Calu3 (cell line): ENCODE measurements at regions of chr1 and their contacts with region 1.

Region 1: GRCh38 chr1:217747156-217747769 is 116.1 kb downstream of the SPATA17 start:
- DNase-seq: no peak
- H3K4me3 Mint-ChIP-seq: no peak overlapping the region
- H3K27ac Mint-ChIP-seq: no peak overlapping the region
- H3K4me1 Mint-ChIP-seq: no peaks in the 10 kb centered on the region
- H3K27me3 Mint-ChIP-seq: no peaks in the 10 kb centered on the region
- CTCF ChIP-seq: peak; percentile 51

Region 2: GRCh38 chr1:216750012-216750627 is 997.1 kb before region 1 on chr1:
- CTCF ChIA-PET with region 1: no interaction called
- intact Hi-C with region 1: loop called (anchors 2 kb)
- DNase-seq: peak; percentile 29
- H3K4me3 Mint-ChIP-seq: no peak overlapping the region
- H3K27ac Mint-ChIP-seq: no peak overlapping the region
- H3K4me1 Mint-ChIP-seq: no peaks in the 10 kb centered on the region
- H3K27me3 Mint-ChIP-seq: no peaks in the 10 kb centered on the region
- CTCF ChIP-seq: peak; percentile 59

Region 3: DNA sequence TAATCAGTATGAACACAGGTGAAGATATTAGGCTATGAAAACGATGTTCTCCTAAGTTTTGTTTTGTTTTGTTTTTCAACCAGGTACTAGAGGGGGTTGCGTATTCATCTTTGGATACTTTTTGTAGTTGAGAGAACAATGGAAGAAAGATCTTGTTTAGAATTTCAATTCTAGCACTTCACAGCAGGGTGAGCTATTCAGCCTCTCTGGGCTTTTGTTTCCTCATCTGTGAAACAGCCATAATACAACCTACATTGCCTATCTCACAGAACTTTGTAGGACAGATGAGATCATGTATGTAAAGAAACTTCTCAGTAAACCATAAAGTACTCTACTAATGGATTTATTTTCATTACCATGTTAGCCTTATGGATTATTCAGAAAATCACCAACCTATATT is 315.9 kb before region 1 on chr1:
- CTCF ChIA-PET with region 1: no interaction called
- intact Hi-C with region 1: loop called (anchors 2 kb)
- DNase-seq: no peak
- H3K4me3 Mint-ChIP-seq: no peak overlapping the region
- H3K27ac Mint-ChIP-seq: no peak overlapping the region
- H3K4me1 Mint-ChIP-seq: no peaks in the 10 kb centered on the region
- H3K27me3 Mint-ChIP-seq: no peaks in the 10 kb centered on the region
- CTCF ChIP-seq: no peak

Region 4: DNA sequence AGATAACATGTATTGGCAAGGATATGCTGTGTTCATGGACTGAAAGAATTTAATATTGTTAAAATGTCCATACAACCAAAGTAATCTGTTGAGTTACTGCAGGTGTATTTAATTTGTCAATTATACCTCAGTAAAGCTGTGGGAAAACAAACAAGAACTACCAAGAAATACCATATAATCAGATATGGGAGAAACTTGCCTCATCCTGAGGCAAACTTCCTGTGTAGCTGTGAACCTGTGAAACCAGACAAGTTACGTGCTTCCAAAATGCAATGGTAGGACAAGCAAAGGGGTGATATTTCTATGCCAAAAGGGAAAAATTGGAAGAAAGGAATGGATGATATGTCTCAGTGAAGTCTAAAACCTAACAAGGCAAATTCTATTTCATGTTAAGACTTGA is 58.5 kb after region 1 on chr1:
- CTCF ChIA-PET with region 1: no interaction called
- intact Hi-C with region 1: loop called (anchors 10 kb)
- DNase-seq: no peak
- H3K4me3 Mint-ChIP-seq: no peak overlapping the region
- H3K27ac Mint-ChIP-seq: no peak overlapping the region
- H3K4me1 Mint-ChIP-seq: no peaks in the 10 kb centered on the region
- H3K27me3 Mint-ChIP-seq: no peaks in the 10 kb centered on the region
- CTCF ChIP-seq: no peak

Region 5: GRCh38 chr1:217982331-217983050 is 235.2 kb after region 1 on chr1:
- CTCF ChIA-PET with region 1: no interaction called
- intact Hi-C with region 1: no loop called
- DNase-seq: no peak
- H3K4me3 Mint-ChIP-seq: no peak overlapping the region
- H3K27ac Mint-ChIP-seq: no peak overlapping the region
- H3K4me1 Mint-ChIP-seq: no peaks in the 10 kb centered on the region
- H3K27me3 Mint-ChIP-seq: peaks cover 14% of the 10 kb centered on the region
- CTCF ChIP-seq: no peak

Region 6: DNA sequence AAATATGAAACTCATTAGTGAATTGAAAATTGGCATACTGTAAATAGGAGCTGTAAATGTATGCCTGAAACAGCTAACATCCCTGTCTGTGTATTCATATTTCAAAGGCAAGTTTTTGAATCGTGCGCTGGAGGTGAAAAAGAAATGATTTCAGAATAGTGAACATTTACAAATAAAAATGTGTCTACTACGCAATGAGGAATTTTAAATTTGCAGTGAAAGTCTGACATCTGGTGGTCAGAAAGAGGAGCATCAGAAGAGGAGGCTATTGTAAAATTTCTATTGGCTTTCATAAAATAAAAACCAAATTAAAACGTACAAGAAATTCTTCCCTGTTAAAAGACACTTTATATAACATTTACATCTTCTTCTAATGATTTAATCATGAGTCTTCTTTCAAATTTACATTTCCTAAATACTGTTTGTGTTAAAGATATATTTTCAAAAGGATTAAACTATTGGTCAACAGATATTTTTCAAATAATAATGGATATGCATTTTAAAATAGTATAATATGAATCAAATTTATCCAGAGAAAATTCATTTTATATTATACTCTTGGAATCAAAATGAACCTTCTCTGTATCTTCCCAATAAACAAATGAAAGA is 424.1 kb after region 1 on chr1:
- CTCF ChIA-PET with region 1: no interaction called
- intact Hi-C with region 1: loop called (anchors 2 kb)
- DNase-seq: no peak
- H3K4me3 Mint-ChIP-seq: no peak overlapping the region
- H3K27ac Mint-ChIP-seq: no peak overlapping the region
- H3K4me1 Mint-ChIP-seq: peaks cover under 1% of the 10 kb centered on the region
- H3K27me3 Mint-ChIP-seq: peaks cover 7% of the 10 kb centered on the region
- CTCF ChIP-seq: peak; percentile 65